Heart left ventricle (tissue), 16 donors: ENCODE measurements at regions of chr15 and their contacts with region 1.

Region 1: GRCh38 chr15:51192521-51193280 is 98.0 kb upstream of the TNFAIP8L3 start:
- DNase-seq: peak; percentile 83 to 92 (median 87)
- ATAC-seq: peak; percentile 69 to 85 (median 82)
- H3K4me3 ChIP-seq: no peak overlapping the region
- H3K27ac ChIP-seq: no peak overlapping the region
- H3K4me1 ChIP-seq: peaks cover 0 to 45% (median 20%) of the 10 kb centered on the region in 12 donors
- H3K27me3 ChIP-seq: peaks cover 0 to 5% (median 0%) of the 10 kb centered on the region in 9 donors
- CTCF ChIP-seq: peak; percentile 92 to 99 (median 96)
- POLR2A ChIP-seq: no peak

Region 2: GRCh38 chr15:50945725-50946124 is 247.0 kb before region 1 on chr15:
- intact Hi-C with region 1: loop called in 1 of 10 experiments (anchors 10 kb)
- DNase-seq: no peak
- ATAC-seq: no peak
- H3K4me3 ChIP-seq: no peak overlapping the region
- H3K27ac ChIP-seq: no peak overlapping the region
- H3K4me1 ChIP-seq: no peaks in the 10 kb centered on the region
- H3K27me3 ChIP-seq: no peaks in the 10 kb centered on the region
- CTCF ChIP-seq: no peak
- POLR2A ChIP-seq: no peak

Region 3: DNA sequence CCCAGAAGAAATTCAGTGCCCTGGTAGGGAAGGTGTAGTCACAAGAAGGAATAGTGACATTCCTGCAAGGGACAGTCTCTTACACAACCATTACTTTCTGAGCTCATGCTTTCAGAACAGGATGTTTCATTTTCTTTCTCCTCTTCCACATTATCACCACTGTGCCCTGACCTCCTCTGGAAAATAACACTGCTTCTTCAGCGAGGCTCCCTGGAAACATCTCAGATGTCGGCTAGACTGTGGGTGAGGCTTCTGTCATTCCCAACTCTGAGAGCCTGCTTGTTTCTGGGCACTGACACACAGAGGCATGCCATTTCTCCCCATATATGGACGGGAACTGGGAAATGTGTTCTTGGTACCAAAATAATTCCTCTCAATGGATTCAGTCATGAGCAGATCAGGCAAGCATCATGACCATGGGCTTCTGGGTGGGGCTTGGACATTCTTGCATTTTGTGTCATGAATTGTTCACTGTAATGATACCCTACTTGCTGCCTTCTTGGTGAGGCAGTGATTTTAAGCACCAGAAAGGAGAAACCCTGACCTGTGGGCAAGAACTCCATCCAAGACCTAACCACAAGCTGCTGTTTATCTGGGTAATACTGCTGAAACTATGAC is 83.7 kb before region 1 on chr15:
- intact Hi-C with region 1: no loop called
- DNase-seq: peak in 1 of 5 donors; percentile 32
- ATAC-seq: peak in 3 of 4 donors; percentile 48 to 72 (median 55)
- H3K4me3 ChIP-seq: no peak overlapping the region
- H3K27ac ChIP-seq: peak overlapping the region in 8 of 12 donors; percentile 7 to 61 (median 36)
- H3K4me1 ChIP-seq: peaks cover 0 to 29% (median 14%) of the 10 kb centered on the region in 12 donors
- H3K27me3 ChIP-seq: no peaks in the 10 kb centered on the region
- CTCF ChIP-seq: no peak
- POLR2A ChIP-seq: no peak

Region 4: DNA sequence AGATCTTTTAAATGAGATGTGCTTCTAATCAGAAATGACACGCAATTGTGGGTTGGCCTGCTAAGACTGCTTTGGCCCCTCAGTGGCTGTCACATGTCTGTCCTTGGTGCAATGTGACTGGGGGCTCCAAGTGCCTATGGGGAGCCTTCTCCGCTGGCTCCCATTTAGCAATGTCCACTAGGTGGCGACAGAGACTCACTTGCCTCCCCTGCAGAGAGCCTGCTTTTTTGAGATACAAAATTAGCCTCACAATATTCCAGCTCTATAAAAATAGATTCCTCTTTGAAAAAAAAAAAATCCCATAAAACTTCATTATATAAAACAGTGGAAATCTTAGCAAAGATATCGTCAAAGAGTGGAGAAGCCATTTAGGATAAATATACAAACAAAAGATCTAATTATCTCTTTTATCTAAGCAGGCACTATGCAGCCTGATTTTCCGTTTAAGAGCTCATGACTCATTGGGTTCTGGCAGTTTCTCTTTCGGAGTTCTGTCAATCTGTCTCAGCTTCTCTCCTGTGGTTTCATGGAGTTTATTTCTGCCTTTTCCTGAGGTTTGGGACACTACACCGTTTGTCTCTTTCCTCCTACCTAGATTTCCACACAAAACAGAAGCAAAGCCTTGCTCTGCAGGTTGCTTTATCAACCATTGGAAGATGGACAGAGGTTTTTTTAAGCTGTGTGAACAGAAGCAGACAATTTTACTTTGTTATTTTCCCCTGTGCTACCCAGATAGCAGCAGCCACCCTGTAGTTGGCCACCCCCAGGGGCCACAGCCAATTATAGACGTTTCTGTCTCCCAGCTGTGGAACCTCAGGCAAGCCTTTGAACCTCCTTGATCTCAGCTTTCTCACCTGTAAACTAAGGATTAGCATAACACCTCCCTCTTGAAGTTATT is 29.6 kb before region 1 on chr15:
- intact Hi-C with region 1: loop called (anchors 1 to 2 kb)
- DNase-seq: peak in 4 of 5 donors; percentile 67 to 73 (median 68)
- ATAC-seq: peak; percentile 80 to 96 (median 90)
- H3K4me3 ChIP-seq: peak overlapping the region in 9 of 12 donors; percentile 13 to 38 (median 30)
- H3K27ac ChIP-seq: peak overlapping the region in 9 of 12 donors; percentile 6 to 75 (median 61)
- H3K4me1 ChIP-seq: peaks cover 0 to 20% (median 8%) of the 10 kb centered on the region in 12 donors
- H3K27me3 ChIP-seq: no peaks in the 10 kb centered on the region
- CTCF ChIP-seq: peak; percentile 89 to 99 (median 95)
- POLR2A ChIP-seq: no peak

Region 5: GRCh38 chr15:51172193-51172592 is 20.5 kb before region 1 on chr15:
- intact Hi-C with region 1: loop called in 1 of 10 experiments (anchors 1 kb)
- DNase-seq: no peak
- ATAC-seq: peak; percentile 79 to 93 (median 90)
- H3K4me3 ChIP-seq: peak overlapping the region in 1 of 12 donors; percentile 26
- H3K27ac ChIP-seq: peak overlapping the region; percentile 37 to 91 (median 80)
- H3K4me1 ChIP-seq: peaks cover 0 to 35% (median 17%) of the 10 kb centered on the region in 12 donors
- H3K27me3 ChIP-seq: no peaks in the 10 kb centered on the region
- CTCF ChIP-seq: no peak
- POLR2A ChIP-seq: no peak

Region 6: DNA sequence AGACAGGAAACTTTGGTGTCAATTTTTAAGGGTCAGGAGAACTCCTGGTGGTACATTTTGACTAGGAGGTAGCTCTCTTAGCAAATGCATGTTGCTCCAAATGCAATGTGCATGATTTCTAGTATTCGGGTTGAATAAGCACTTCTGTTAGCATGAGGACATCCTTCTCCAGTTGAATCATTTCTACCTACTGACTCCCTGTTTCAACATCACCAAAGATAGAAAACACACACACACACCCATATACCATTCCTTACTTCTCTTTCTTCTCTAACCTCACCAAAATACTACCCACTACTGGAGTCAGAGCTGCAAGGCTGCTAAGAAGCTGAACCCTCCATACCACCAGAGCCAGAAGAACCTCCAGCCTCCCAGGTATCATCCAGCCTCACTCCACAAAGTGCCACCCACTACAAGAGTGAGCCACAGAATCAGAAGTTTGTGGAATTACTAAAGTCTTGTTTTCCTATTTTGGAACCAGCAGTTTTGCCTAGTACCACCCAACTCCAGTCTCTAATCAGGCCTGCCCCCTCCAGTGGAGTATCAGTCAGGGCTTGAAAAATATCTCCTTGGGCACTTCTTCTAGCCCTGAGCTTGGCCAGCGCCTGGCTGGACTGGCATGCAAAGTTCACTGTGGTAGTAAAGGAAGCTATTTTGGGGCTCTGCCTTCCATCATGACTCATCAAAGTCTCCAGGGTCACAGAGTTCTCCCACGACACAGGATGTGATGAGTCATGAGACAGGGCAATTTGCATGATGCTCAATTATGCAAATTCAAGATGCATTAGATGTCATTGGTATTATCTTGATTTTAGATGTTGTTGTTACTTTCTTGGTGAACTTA is 35.5 kb after region 1 on chr15:
- intact Hi-C with region 1: no loop called
- DNase-seq: peak in 4 of 5 donors; percentile 19 to 54 (median 28)
- ATAC-seq: peak in 3 of 4 donors; percentile 75 to 91 (median 90)
- H3K4me3 ChIP-seq: no peak overlapping the region
- H3K27ac ChIP-seq: peak overlapping the region in 2 of 12 donors; percentile 46 to 50
- H3K4me1 ChIP-seq: peaks cover 0 to 51% (median 10%) of the 10 kb centered on the region in 12 donors
- H3K27me3 ChIP-seq: no peaks in the 10 kb centered on the region
- CTCF ChIP-seq: no peak
- POLR2A ChIP-seq: no peak